Esophagus muscularis mucosa (tissue), 4 donors: ENCODE measurements at regions of chr1 and their contacts with region 1.

Region 1: GRCh38 chr1:42462828-42463763 is at the start of gene CCDC30:
- DNase-seq: peak; percentile 99
- H3K4me3 ChIP-seq: peak within 1 kb of the TSS; percentile 68 to 82 (median 78)
- H3K27ac ChIP-seq: peak within 1 kb of the TSS; percentile 13 to 69 (median 32)
- H3K4me1 ChIP-seq: peaks cover 14 to 22% (median 18%) of the 10 kb centered on the region in 4 donors
- H3K27me3 ChIP-seq: no peaks in the 10 kb centered on the region
- CTCF ChIP-seq: no peak
- EP300 ChIP-seq: no peak
- POLR2A ChIP-seq: no peak
- total RNA-seq, gene CCDC30: 0.99 to 4.1 (median 1.7) TPM

Region 2: GRCh38 chr1:42114269-42114668 is 348.8 kb before region 1 on chr1:
- intact Hi-C with region 1: no loop called
- DNase-seq: no peak
- H3K4me3 ChIP-seq: no peak overlapping the region
- H3K27ac ChIP-seq: no peak overlapping the region
- H3K4me1 ChIP-seq: no peaks in the 10 kb centered on the region
- H3K27me3 ChIP-seq: no peaks in the 10 kb centered on the region
- CTCF ChIP-seq: no peak
- EP300 ChIP-seq: no peak
- POLR2A ChIP-seq: no peak

Region 3: GRCh38 chr1:42368096-42368795 is 94.8 kb before region 1 on chr1:
- intact Hi-C with region 1: no loop called
- DNase-seq: no peak
- H3K4me3 ChIP-seq: no peak overlapping the region
- H3K27ac ChIP-seq: no peak overlapping the region
- H3K4me1 ChIP-seq: no peaks in the 10 kb centered on the region
- H3K27me3 ChIP-seq: peaks cover 0 to 11% (median 0%) of the 10 kb centered on the region in 4 donors
- CTCF ChIP-seq: no peak
- EP300 ChIP-seq: no peak
- POLR2A ChIP-seq: no peak

Region 4: DNA sequence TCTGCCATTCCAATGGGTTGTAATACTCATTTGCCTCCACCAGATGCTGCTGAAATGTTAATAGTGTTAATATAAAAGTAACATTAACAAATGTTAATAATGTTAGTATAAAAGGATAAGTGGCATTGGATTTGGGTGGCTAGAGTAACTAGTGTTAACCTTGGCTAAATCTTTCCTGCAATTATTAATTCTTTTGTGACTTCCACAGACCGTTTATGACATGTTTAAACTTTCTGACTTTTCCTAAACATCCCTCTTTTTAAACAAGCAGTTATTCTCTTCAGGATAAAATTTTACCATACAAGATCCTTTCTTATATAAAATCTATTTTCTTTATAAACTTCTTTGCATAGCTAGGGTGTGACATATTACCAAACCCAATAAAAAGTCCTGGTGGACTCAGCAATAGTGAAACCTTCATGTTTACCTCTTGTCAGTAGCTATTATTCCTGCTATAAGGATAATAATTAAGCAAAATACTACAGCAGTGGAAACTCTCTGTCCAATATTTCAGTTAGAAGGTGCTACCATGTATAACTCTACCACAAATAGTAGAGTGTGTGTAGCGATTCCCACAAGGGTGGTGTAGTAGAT is 41.5 kb after region 1 on chr1:
- intact Hi-C with region 1: no loop called
- DNase-seq: no peak
- H3K4me3 ChIP-seq: no peak overlapping the region
- H3K27ac ChIP-seq: no peak overlapping the region
- H3K4me1 ChIP-seq: no peaks in the 10 kb centered on the region
- H3K27me3 ChIP-seq: no peaks in the 10 kb centered on the region
- CTCF ChIP-seq: no peak
- EP300 ChIP-seq: no peak
- POLR2A ChIP-seq: no peak

Region 5: GRCh38 chr1:42681741-42682483 is 218.8 kb after region 1 on chr1 and contains the start of gene YBX1:
- intact Hi-C with region 1: loop called (anchors 10 kb)
- DNase-seq: peak; percentile 100
- H3K4me3 ChIP-seq: peak within 1 kb of the TSS; percentile 95 to 98 (median 96)
- H3K27ac ChIP-seq: peak within 1 kb of the TSS; percentile 96 to 99 (median 98)
- H3K4me1 ChIP-seq: peaks cover 50 to 56% (median 53%) of the 10 kb centered on the region in 4 donors
- H3K27me3 ChIP-seq: no peaks in the 10 kb centered on the region
- CTCF ChIP-seq: no peak
- EP300 ChIP-seq: no peak
- POLR2A ChIP-seq: peak; percentile 69
- total RNA-seq, gene YBX1: 778 to 889 (median 812) TPM